GM12878 (cell line): ENCODE measurements at regions of chr16 and their contacts with region 1.

Region 1: GRCh38 chr16:11379420-11379819 is 34.2 kb downstream of the RMI2 start:
- DNase-seq: peak; percentile 71
- ATAC-seq: peak; percentile 98
- H3K4me3 ChIP-seq: no peak overlapping the region
- H3K27ac ChIP-seq: peak overlapping the region; percentile 41
- H3K4me1 ChIP-seq: peaks cover 12% of the 10 kb centered on the region
- H3K27me3 ChIP-seq: no peaks in the 10 kb centered on the region
- CTCF ChIP-seq: no peak
- EP300 ChIP-seq: peak; percentile 80 to 88
- POLR2A ChIP-seq: 0 out of 2 replicates have a peak, but pooled peaks have one; percentile 30
- RAD21 ChIP-seq: 0 out of 2 replicates have a peak, but pooled peaks have one; percentile 12

Region 2: DNA sequence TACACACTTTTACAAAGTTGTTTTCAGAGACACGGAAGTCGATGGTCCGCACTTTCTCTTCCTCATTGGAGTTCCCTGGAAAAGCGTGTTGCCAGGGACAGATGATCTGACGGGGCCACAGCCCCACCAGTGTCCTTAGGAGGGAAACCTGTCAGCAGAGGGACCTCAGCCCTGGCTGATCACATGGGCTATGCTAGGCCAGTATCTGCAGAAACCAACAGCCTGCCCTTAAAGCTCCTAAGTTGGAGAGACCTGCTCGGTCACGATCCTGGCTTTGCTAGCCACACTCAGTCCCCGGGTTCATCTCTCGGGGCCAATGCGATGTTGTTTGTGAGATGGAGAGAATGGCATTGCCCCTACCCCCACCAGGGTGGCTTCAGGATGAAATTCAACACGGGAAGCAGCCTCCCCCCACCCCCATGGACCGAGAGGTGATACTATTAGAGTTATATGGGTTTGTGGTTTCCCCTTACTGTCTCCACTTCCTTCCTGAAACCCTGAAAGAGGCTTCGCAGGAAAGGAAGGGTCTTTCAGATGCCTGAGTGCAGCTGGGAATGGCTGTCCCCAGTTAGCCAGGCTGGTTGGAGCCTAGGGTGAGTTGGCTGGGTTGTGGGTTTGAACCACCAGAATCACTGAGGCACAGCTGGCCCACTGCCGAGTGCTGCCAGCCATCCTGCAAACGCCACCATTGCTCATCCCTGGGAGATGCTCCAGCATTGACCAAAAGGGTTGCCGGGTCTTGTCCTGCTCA is 17.5 kb before region 1 on chr16:
- CTCF ChIA-PET with region 1: interaction called, 4 read pairs
- POLR2A ChIA-PET with region 1: interaction called, 6 read pairs
- RAD21 ChIA-PET with region 1: interaction called, 18 read pairs
- SMC1A ChIA-PET with region 1: interaction called, 12 read pairs
- in situ Hi-C with region 1: no loop called
- intact Hi-C with region 1: loop called (anchors 1 kb)
- DNase-seq: peak; percentile 45
- ATAC-seq: peak; percentile 65
- H3K4me3 ChIP-seq: peak overlapping the region; percentile 38; the same call in 1 of the 2 replicates
- H3K27ac ChIP-seq: peak overlapping the region; percentile 5; the same call in 1 of the 2 replicates
- H3K4me1 ChIP-seq: peaks cover 28% of the 10 kb centered on the region
- H3K27me3 ChIP-seq: no peaks in the 10 kb centered on the region
- CTCF ChIP-seq: no peak
- EP300 ChIP-seq: peak in 1 of 2 experiments; percentile 70; a peak in 2 of 4 replicates
- POLR2A ChIP-seq: no peak
- RAD21 ChIP-seq: 0 out of 2 replicates have a peak, but pooled peaks have one; percentile 24

Region 3: GRCh38 chr16:11396241-11397048 is 17.0 kb after region 1 on chr16:
- CTCF ChIA-PET with region 1: interaction called, 25 read pairs
- POLR2A ChIA-PET with region 1: no interaction called
- RAD21 ChIA-PET with region 1: interaction called, 4 read pairs
- SMC1A ChIA-PET with region 1: no interaction called
- in situ Hi-C with region 1: no loop called
- intact Hi-C with region 1: no loop called
- DNase-seq: no peak
- ATAC-seq: peak; percentile 90
- H3K4me3 ChIP-seq: no peak overlapping the region
- H3K27ac ChIP-seq: no peak overlapping the region
- H3K4me1 ChIP-seq: no peaks in the 10 kb centered on the region
- H3K27me3 ChIP-seq: no peaks in the 10 kb centered on the region; a peak in 1 of 4 replicates
- CTCF ChIP-seq: peak; percentile 97 to 98 (median 97); a peak in 5 of 6 replicates
- EP300 ChIP-seq: no peak
- POLR2A ChIP-seq: no peak
- RAD21 ChIP-seq: peak; percentile 97

Region 4: GRCh38 chr16:11481987-11482386 is 102.6 kb after region 1 on chr16:
- CTCF ChIA-PET with region 1: no interaction called
- POLR2A ChIA-PET with region 1: no interaction called
- RAD21 ChIA-PET with region 1: no interaction called
- SMC1A ChIA-PET with region 1: no interaction called
- in situ Hi-C with region 1: no loop called
- intact Hi-C with region 1: no loop called
- DNase-seq: no peak
- ATAC-seq: no peak
- H3K4me3 ChIP-seq: no peak overlapping the region
- H3K27ac ChIP-seq: no peak overlapping the region
- H3K4me1 ChIP-seq: no peaks in the 10 kb centered on the region
- H3K27me3 ChIP-seq: no peaks in the 10 kb centered on the region
- CTCF ChIP-seq: no peak
- EP300 ChIP-seq: no peak
- POLR2A ChIP-seq: no peak
- RAD21 ChIP-seq: no peak

Region 5: DNA sequence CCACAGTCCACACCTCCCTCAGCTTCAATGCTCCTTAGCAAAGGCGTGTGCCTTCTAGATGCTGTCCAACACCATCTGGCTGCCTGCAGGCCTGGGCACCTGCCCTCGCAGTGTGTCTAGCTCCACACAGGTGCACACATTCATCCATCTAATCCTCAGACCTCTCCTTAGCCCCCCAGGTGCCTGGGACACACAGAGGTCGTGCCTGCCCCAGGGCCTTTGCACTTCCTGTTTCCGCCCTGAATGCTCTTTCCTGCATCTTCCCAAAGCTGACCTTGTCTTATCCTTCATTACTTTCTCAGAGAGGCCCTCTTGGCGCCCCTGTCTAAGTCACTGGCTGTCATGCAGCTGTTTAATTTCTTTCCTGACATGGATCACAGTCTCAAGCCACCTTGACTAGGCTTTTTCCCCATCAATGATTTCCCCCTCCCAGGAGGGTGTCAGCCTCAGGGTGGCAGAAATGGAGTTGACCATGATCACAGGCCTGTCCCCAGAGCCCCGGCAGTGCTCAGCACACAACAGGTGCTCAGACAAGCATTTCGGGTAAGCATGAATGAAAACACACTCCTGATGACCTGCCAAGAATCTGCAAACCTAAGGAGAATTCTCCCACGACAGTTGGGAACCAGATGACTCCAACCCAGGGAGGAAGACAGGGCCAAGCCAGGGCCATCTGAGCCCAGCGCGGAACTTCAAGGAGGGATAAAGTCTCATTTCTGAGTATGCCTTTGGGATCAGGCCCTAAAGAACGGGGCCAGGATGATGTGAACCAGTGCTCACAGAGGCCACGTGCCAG is 131.0 kb after region 1 on chr16:
- CTCF ChIA-PET with region 1: no interaction called
- POLR2A ChIA-PET with region 1: no interaction called
- RAD21 ChIA-PET with region 1: no interaction called
- SMC1A ChIA-PET with region 1: no interaction called
- in situ Hi-C with region 1: no loop called
- intact Hi-C with region 1: no loop called
- DNase-seq: no peak
- ATAC-seq: no peak
- H3K4me3 ChIP-seq: no peak overlapping the region
- H3K27ac ChIP-seq: no peak overlapping the region
- H3K4me1 ChIP-seq: peaks cover 6% of the 10 kb centered on the region; the same call in 1 of the 2 replicates
- H3K27me3 ChIP-seq: no peaks in the 10 kb centered on the region
- CTCF ChIP-seq: no peak
- EP300 ChIP-seq: no peak
- POLR2A ChIP-seq: no peak
- RAD21 ChIP-seq: no peak

Region 6: GRCh38 chr16:11632464-11632939 is 253.1 kb after region 1 on chr16:
- CTCF ChIA-PET with region 1: no interaction called
- POLR2A ChIA-PET with region 1: no interaction called
- RAD21 ChIA-PET with region 1: no interaction called
- SMC1A ChIA-PET with region 1: no interaction called
- in situ Hi-C with region 1: no loop called
- intact Hi-C with region 1: no loop called
- DNase-seq: no peak
- ATAC-seq: no peak
- H3K4me3 ChIP-seq: no peak overlapping the region
- H3K27ac ChIP-seq: no peak overlapping the region
- H3K4me1 ChIP-seq: peaks cover 8% of the 10 kb centered on the region
- H3K27me3 ChIP-seq: no peaks in the 10 kb centered on the region; a peak in 1 of 4 replicates
- CTCF ChIP-seq: no peak
- EP300 ChIP-seq: no peak
- POLR2A ChIP-seq: no peak
- RAD21 ChIP-seq: no peak